Spleen (tissue), 13 donors: ENCODE measurements at regions of chr17 and their contacts with region 1.

Region 1: DNA sequence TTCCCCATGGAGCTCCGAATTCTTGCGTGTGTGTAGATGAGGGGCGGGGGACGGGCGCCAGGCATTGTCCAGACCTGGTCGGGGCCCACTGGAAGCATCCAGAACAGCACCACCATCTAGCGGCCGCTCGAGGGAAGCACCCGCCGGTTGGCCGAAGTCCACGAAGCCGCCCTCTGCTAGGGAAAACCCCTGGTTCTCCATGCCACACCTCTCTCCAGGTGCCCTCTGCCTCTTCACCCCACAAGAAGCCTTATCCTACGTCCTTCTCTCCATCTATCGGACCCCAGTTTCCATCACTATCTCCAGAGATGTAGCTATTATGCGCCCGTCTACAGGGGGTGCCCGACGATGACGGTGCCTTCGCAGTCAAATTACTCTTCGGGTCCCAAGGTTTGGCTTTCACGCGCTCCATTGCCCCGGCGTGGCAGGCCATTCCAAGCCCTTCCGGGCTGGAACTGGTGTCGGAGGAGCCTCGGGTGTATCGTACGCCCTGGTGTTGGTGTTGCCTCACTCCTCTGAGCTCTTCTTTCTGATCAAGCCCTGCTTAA is 617 bp upstream of the SENP3 start:
- DNase-seq: peak; percentile 96
- H3K4me3 ChIP-seq: peak overlapping the region; percentile 75 to 98 (median 95)
- H3K27ac ChIP-seq: peak overlapping the region; percentile 86 to 98 (median 94)
- H3K4me1 ChIP-seq: peaks cover 43 to 89% (median 72%) of the 10 kb centered on the region in 6 donors
- H3K27me3 ChIP-seq: no peaks in the 10 kb centered on the region
- CTCF ChIP-seq: peak; percentile 75 to 96 (median 86)
- POLR2A ChIP-seq: no peak

Region 2: GRCh38 chr17:7435221-7435675 is 125.9 kb before region 1 on chr17 and contains the start of gene TMEM102:
- intact Hi-C with region 1: loop called (anchors 5 kb)
- DNase-seq: peak; percentile 97
- H3K4me3 ChIP-seq: peak within 1 kb of the TSS; percentile 62 to 84 (median 72)
- H3K27ac ChIP-seq: peak within 1 kb of the TSS; percentile 78 to 93 (median 87)
- H3K4me1 ChIP-seq: peaks cover 25 to 56% (median 50%) of the 10 kb centered on the region in 6 donors
- H3K27me3 ChIP-seq: peaks cover 0 to 31% (median 20%) of the 10 kb centered on the region in 7 donors
- CTCF ChIP-seq: no peak
- POLR2A ChIP-seq: peak in 2 of 3 donors; percentile 14 to 21
- total RNA-seq, gene TMEM102: 7.1 to 17.4 (median 10.9) TPM

Region 3: DNA sequence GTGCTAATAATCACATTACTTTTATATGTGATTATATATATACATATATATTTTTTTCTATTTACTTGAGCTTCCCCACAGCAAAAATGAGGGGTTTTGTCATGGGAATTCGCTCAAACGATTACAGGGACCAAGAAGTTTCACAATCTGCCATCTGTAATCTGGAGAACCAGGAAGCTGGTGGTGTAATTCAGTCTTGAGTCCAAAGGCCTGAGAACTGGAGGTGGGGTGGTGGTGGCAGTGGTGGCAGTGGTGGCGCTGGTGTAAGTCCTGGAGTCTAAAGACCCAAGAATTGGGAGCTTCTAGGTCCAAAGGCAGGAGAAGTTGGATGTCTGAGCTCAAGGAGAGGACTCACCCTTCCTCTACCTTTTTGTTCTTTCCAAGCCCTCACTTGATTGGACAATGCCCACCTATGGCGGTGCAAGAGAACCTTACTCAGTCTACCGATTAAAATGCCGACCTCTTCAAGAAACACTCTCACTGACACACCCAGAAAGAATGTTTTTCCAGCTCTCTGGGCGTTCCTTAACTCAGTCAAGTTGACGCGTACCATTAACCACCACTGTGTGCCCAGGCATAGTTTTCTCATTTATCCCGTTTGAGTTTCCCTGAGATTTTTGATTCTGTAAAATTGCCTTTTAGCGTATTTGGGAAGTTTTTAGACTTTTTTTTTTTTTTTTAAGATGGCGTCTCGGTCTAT is 45.0 kb before region 1 on chr17:
- intact Hi-C with region 1: loop called (anchors 5 kb)
- DNase-seq: no peak
- H3K4me3 ChIP-seq: no peak overlapping the region
- H3K27ac ChIP-seq: peak overlapping the region in 3 of 8 donors; percentile 27 to 56 (median 28)
- H3K4me1 ChIP-seq: peaks cover 0 to 21% (median 8%) of the 10 kb centered on the region in 6 donors
- H3K27me3 ChIP-seq: no peaks in the 10 kb centered on the region
- CTCF ChIP-seq: no peak
- POLR2A ChIP-seq: no peak